GM12878 (cell line): ENCODE measurements at regions of chr6 and their contacts with region 1.

Region 1: DNA sequence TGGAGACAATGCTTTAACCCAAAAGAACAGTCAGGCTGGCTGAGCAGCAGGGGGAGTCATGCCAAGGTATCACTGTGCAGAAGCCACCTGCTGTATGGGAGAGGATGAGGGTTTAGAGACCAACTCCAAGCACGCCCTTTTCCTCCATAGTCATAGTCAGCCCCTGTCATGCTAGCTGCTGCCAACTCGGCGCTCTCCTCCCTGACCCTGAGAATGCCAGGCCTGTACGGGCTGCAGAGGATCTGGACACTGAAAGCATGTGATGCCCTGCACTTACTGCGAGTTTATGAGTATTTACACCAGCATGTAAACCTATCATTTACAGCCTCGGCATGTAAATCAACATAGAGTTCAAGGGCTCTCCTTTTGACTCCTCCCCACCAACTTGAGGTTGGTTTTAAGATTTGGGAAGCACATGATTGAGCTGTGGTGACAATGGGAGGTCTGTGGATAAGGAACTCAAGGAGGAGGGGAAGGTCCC is 11.7 kb upstream of the SCUBE3 start:
- DNase-seq: no peak
- ATAC-seq: 0 out of 3 replicates have a peak, but pooled peaks have one; percentile 17
- H3K4me3 ChIP-seq: no peak overlapping the region
- H3K27ac ChIP-seq: no peak overlapping the region
- H3K4me1 ChIP-seq: no peaks in the 10 kb centered on the region
- H3K27me3 ChIP-seq: no peaks in the 10 kb centered on the region; a peak in 4 of 4 replicates
- CTCF ChIP-seq: no peak
- EP300 ChIP-seq: no peak
- POLR2A ChIP-seq: no peak
- RAD21 ChIP-seq: no peak

Region 2: GRCh38 chr6:34986845-34987246 is 215.3 kb before region 1 on chr6:
- CTCF ChIA-PET with region 1: interaction called, 48 read pairs
- POLR2A ChIA-PET with region 1: no interaction called
- RAD21 ChIA-PET with region 1: interaction called, 10 read pairs
- SMC1A ChIA-PET with region 1: interaction called, 12 read pairs
- in situ Hi-C with region 1: no loop called
- intact Hi-C with region 1: loop called (anchors 5 kb)
- DNase-seq: no peak
- ATAC-seq: peak; percentile 79
- H3K4me3 ChIP-seq: no peak overlapping the region
- H3K27ac ChIP-seq: no peak overlapping the region
- H3K4me1 ChIP-seq: peaks cover 3% of the 10 kb centered on the region
- H3K27me3 ChIP-seq: no peaks in the 10 kb centered on the region
- CTCF ChIP-seq: peak; percentile 70 to 83 (median 79)
- EP300 ChIP-seq: no peak
- POLR2A ChIP-seq: no peak
- RAD21 ChIP-seq: peak; percentile 94

Region 3: DNA sequence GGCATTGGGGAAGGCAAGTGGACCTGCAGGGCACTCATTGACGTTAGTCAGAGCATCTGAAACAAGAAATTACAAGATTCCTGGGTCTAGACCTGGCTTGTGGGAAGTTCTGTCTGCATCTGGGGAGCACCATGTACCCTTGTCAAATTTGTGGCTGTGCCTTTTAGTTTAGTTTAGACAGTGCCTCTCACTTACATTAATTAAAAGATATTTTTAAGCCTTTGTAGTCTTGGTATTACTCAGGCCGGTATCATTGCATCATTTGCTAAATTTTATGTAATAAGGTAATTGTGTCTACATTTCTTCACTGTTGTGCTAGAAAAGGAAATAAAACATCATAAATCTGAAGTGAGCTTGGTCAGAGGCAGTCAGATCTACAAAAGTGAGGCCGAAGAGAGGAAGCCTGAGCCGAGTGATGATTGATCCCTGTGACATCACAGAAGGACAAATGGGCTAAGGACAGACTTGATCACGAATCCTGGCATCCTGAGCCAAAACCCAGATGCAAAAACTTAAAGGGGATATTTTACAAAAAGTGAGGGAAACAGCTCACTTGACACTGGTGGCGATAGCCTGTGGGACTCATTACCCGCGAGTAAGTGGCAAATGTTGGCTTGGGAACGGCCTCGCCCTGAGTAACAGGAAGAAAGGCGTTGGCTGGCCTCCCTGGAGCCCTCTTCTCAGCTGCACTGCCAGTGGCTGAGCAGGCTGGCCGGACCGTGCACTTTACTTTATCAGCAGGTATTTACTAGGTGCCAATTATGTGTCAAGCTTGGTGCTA is 167.5 kb before region 1 on chr6:
- CTCF ChIA-PET with region 1: no interaction called
- POLR2A ChIA-PET with region 1: no interaction called
- RAD21 ChIA-PET with region 1: no interaction called
- SMC1A ChIA-PET with region 1: no interaction called
- in situ Hi-C with region 1: no loop called
- intact Hi-C with region 1: no loop called
- DNase-seq: no peak
- ATAC-seq: peak; percentile 85
- H3K4me3 ChIP-seq: no peak overlapping the region
- H3K27ac ChIP-seq: no peak overlapping the region
- H3K4me1 ChIP-seq: peaks cover 16% of the 10 kb centered on the region
- H3K27me3 ChIP-seq: no peaks in the 10 kb centered on the region
- CTCF ChIP-seq: no peak
- EP300 ChIP-seq: no peak
- POLR2A ChIP-seq: no peak
- RAD21 ChIP-seq: no peak

Region 4: GRCh38 chr6:35146453-35146852 is 55.7 kb before region 1 on chr6:
- CTCF ChIA-PET with region 1: interaction called, 114 read pairs
- POLR2A ChIA-PET with region 1: no interaction called
- RAD21 ChIA-PET with region 1: interaction called, 27 read pairs
- SMC1A ChIA-PET with region 1: interaction called, 65 read pairs
- in situ Hi-C with region 1: no loop called
- intact Hi-C with region 1: loop called (anchors 1 kb)
- DNase-seq: no peak
- ATAC-seq: peak; percentile 86
- H3K4me3 ChIP-seq: no peak overlapping the region
- H3K27ac ChIP-seq: no peak overlapping the region
- H3K4me1 ChIP-seq: peaks cover 6% of the 10 kb centered on the region
- H3K27me3 ChIP-seq: no peaks in the 10 kb centered on the region
- CTCF ChIP-seq: peak; percentile 43 to 73 (median 62); a peak in 5 of 6 replicates
- EP300 ChIP-seq: no peak
- POLR2A ChIP-seq: no peak
- RAD21 ChIP-seq: peak; percentile 71

Region 5: DNA sequence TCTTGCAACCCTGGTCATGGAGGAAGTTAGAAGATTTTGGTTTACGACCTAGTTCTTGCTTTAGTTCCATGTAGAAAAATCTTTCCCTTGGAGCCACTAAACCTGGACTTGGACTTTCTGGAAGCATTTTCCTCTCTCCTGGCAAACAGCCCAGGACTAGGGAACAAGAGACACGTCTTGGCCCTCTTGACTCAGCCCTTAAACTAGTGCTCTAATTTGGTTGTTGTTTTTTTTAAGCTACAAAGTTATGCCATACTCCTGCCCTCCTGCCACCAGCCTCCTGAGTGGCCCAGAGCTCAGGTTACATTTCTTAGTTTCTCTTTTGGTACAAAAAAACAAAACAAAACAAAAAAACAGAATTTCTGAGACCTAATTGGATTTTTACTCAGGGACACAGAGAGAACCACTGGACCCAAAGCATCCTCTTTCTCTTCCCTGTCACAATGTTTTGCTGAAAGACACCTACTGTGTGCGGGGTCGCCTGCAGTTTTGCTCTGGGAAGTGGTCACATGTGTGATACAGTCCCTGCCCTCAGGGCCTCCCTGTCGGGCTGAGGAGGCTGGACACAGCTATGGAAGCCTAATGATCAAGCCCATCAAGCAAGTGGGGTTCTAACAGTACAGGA is 20.7 kb before region 1 on chr6:
- CTCF ChIA-PET with region 1: interaction called, 21 read pairs
- POLR2A ChIA-PET with region 1: no interaction called
- RAD21 ChIA-PET with region 1: no interaction called
- SMC1A ChIA-PET with region 1: interaction called, 3 read pairs
- in situ Hi-C with region 1: no loop called
- intact Hi-C with region 1: no loop called
- DNase-seq: no peak
- ATAC-seq: no peak
- H3K4me3 ChIP-seq: no peak overlapping the region
- H3K27ac ChIP-seq: no peak overlapping the region
- H3K4me1 ChIP-seq: peaks cover 14% of the 10 kb centered on the region
- H3K27me3 ChIP-seq: no peaks in the 10 kb centered on the region
- CTCF ChIP-seq: no peak
- EP300 ChIP-seq: no peak
- POLR2A ChIP-seq: no peak
- RAD21 ChIP-seq: no peak

Region 6: GRCh38 chr6:35219683-35220326 is 17.7 kb after region 1 on chr6:
- CTCF ChIA-PET with region 1: interaction called, 23 read pairs
- POLR2A ChIA-PET with region 1: no interaction called
- RAD21 ChIA-PET with region 1: interaction called, 3 read pairs
- SMC1A ChIA-PET with region 1: no interaction called
- in situ Hi-C with region 1: no loop called
- intact Hi-C with region 1: no loop called
- DNase-seq: no peak
- ATAC-seq: no peak
- H3K4me3 ChIP-seq: no peak overlapping the region
- H3K27ac ChIP-seq: no peak overlapping the region
- H3K4me1 ChIP-seq: no peaks in the 10 kb centered on the region
- H3K27me3 ChIP-seq: peaks cover 4 to 5% of the 10 kb centered on the region in 2 experiments; a peak in 3 of 4 replicates
- CTCF ChIP-seq: no peak
- EP300 ChIP-seq: no peak
- POLR2A ChIP-seq: no peak
- RAD21 ChIP-seq: no peak